ENCODE measurements at regions of chr10 and their contacts with region 1.

Region 1: DNA sequence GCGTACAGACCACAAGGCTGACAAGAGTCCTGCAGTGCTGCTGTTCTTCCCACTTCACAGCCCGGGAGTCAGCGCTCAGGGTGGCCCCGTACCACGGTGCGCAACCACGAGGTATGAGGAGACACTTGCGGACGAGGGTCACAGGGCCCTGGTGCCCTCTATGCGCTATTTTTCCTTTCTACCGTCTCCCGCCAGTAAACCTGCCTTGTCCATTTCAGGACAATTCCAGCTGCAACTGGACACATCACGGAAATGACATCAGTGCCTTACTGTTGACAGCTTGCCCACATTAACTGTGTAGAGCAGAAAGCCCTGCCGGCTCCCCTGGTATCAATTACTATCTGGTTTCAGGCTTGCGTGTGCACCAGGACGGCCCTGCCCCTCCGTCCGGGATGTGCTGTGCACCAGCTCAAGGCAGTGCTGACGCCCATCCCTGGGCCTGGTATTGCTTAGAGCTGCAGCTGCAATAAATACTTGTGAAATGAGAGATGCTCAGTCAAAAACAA is 65.1 kb downstream of the ZRANB1 start:
- DNase-seq: peak in 2 of 3 donors; percentile 50 to 64
- ATAC-seq: peak; percentile 28 to 44
- H3K4me3 ChIP-seq: no peak overlapping the region
- H3K27ac ChIP-seq: no peak overlapping the region
- H3K4me1 ChIP-seq: peaks cover 21% of the 10 kb centered on the region
- H3K27me3 ChIP-seq: no peaks in the 10 kb centered on the region

Region 2: GRCh38 chr10:125060826-125061556 is 54.0 kb after region 1 on chr10:
- intact Hi-C with region 1: loop called in 1 of 4 experiments (anchors 5 kb)
- DNase-seq: peak; percentile 86 to 95 (median 94)
- ATAC-seq: peak; percentile 64 to 78
- H3K4me3 ChIP-seq: no peak overlapping the region
- H3K27ac ChIP-seq: peak overlapping the region; percentile 34
- H3K4me1 ChIP-seq: peaks cover 53% of the 10 kb centered on the region
- H3K27me3 ChIP-seq: no peaks in the 10 kb centered on the region

Measured in right cardiac atrium (tissue), 5 donors.